Mammary epithelial cell (primary cell): ENCODE measurements at regions of chr6 and their contacts with region 1.

Region 1: GRCh38 chr6:126033696-126034095 is 47.4 kb downstream of the TRMT11 start:
- DNase-seq: peak; percentile 58
- H3K4me3 ChIP-seq: no peak overlapping the region
- H3K27ac ChIP-seq: no peak overlapping the region
- H3K4me1 ChIP-seq: peaks cover 3% of the 10 kb centered on the region
- H3K27me3 ChIP-seq: no peaks in the 10 kb centered on the region
- CTCF ChIP-seq: peak; percentile 57 to 66

Region 2: DNA sequence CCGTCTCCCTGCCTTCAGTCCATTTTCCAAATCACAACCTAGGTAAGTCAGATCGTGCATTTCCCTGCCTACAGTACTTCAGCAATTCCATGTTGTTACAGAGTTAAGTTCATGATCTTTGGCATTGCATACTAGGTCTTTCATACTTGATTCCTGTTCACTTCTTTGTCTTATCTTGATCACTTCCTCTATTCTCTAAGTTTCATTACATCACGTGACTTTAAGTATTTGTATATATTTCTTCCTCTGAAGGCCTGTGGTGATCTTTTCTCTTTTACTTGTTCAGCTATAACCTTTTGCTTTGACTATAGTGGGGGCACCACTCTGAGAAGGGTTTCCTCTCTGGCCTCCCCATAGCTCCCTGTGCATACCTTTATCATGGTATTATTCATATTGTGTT is 52.9 kb after region 1 on chr6:
- CTCF ChIA-PET with region 1: no interaction called
- dilution Hi-C with region 1: no loop called
- in situ Hi-C with region 1: no loop called
- intact Hi-C with region 1: no loop called
- DNase-seq: no peak
- H3K4me3 ChIP-seq: no peak overlapping the region
- H3K27ac ChIP-seq: no peak overlapping the region
- H3K4me1 ChIP-seq: no peaks in the 10 kb centered on the region
- H3K27me3 ChIP-seq: no peaks in the 10 kb centered on the region
- CTCF ChIP-seq: no peak

Region 3: DNA sequence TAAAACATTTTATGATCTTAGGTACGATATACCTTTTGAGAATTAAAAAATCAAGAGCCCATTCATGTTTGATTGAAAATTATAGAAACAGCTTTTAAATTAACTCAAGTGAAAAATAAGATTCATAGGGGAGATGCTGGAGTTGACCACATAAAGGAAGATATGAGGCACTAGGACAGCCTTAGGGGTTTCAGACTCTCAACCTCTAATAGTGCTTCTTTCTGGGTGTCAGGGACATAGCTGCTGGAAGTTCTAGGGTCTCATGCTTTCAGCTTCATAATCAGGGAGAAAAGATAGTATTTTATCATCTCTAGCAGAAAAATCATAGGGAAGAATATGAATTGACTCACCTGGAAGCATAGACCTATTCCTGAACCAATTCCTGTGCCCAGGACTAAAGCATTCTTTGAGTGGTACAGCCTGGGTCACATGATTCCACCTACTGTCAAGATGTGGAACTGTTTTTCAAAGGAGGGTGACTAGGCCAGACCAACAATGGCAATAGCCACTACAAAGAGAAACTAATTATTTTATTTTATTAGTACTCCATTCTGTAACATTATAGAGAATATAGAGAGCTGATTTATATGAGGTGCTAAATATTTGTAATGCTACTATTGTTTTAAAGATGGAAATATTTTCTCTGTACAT is 278.4 kb after region 1 on chr6:
- CTCF ChIA-PET with region 1: no interaction called
- dilution Hi-C with region 1: no loop called
- in situ Hi-C with region 1: no loop called
- intact Hi-C with region 1: loop called (anchors 5 kb)
- DNase-seq: peak; percentile 43
- H3K4me3 ChIP-seq: no peak overlapping the region
- H3K27ac ChIP-seq: no peak overlapping the region
- H3K4me1 ChIP-seq: no peaks in the 10 kb centered on the region
- H3K27me3 ChIP-seq: no peaks in the 10 kb centered on the region
- CTCF ChIP-seq: peak; percentile 49 to 50

Region 4: DNA sequence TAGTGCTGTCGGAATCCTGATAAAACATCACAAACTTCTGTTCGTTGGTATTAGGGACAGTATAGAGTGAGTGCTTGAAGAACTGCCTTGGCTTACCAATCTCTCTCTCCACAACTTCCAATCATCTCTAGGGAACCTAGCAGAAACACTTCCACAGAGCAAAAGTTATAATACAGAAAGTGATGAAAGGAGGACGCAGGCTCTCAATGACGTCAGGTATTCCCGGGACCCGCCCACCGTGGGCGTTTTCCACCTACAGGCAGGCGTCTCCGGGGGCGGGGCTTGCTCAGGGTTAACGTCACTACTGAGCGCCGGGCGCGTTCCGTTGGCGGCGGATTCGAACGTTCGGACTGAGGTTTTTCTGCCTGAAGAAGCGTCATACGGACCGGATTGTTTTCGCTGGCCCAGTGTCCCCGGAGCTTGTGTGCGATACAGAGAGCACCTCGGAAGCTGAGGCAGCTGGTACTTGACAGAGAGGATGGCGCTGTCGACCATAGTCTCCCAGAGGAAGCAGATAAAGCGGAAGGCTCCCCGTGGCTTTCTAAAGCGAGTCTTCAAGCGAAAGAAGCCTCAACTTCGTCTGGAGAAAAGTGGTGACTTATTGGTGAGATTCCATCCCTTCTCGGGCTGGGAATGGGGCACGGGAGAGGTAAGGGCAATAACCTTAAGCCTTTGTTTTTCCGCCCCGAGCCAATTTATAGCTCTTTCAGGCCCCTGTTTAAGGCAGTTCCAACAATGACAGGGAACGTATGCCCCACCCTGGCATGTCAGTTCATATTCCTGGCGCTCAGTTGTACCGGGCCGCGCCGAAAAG is 306.3 kb after region 1 on chr6 and contains the start of gene CENPW:
- CTCF ChIA-PET with region 1: no interaction called
- dilution Hi-C with region 1: no loop called
- in situ Hi-C with region 1: loop called in 1 of 2 experiments (anchors 25 kb)
- intact Hi-C with region 1: no loop called
- DNase-seq: peak; percentile 90
- H3K4me3 ChIP-seq: peak within 1 kb of the TSS; percentile 72 to 89 (median 78)
- H3K27ac ChIP-seq: peak within 1 kb of the TSS; percentile 86
- H3K4me1 ChIP-seq: peaks cover 10% of the 10 kb centered on the region
- H3K27me3 ChIP-seq: no peaks in the 10 kb centered on the region
- CTCF ChIP-seq: no peak
- total RNA-seq, gene CENPW: 1.7 to 42.0 TPM